ENCODE measurements at regions of chr18 and their contacts with region 1.

Region 1: DNA sequence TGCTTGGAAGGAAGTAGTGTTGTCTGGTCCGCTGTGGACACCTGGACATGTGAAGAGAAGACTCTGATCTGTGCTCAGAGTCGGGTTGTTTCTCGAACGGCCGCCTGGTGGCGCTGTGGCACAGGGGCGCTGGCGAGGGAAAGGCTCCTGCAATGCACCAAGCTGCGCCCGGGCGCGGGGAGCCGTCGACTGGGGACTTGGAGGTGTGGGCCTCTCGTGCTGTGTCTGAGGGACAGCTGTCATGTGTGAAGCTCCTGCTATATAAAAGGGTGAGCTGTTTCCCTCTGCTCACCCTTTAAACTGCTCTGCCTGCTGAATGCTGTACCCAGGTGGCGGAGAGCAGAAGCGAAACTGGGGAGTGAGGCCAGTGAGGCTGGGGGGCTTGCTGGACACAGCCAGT is 44.0 kb downstream of the GNAL start:
- DNase-seq: peak; percentile 57 to 74 (median 71)
- H3K4me3 ChIP-seq: peak overlapping the region in 5 of 7 experiments; percentile 12 to 56 (median 43)
- H3K27ac ChIP-seq: no peak overlapping the region
- H3K4me1 ChIP-seq: peaks cover 0 to 3% (median 1%) of the 10 kb centered on the region in 4 experiments
- H3K27me3 ChIP-seq: peaks cover 0 to 27% (median 8%) of the 10 kb centered on the region in 5 experiments

Region 2: DNA sequence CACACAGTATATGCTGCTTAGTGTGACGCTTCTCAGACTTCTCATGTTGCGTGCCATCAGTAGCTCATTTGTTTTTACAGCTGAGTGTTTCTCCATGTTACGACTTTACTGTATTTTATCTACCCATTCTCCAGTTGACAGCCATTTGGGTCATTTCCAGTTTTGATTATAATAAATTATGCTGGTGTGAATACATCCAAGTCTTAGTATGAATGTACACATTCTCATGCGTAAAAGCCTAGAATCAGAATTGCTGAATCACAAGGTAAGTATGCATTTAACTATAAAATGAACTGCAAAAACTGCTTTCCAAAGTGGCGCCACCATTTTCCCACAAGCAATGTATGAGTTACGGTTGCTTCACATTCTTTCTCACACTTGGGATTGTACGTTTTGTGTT is 307.8 kb before region 1 on chr18:
- CTCF ChIA-PET with region 1: no interaction called
- POLR2A ChIA-PET with region 1: no interaction called
- DNase-seq: no peak
- H3K4me3 ChIP-seq: no peak overlapping the region
- H3K27ac ChIP-seq: no peak overlapping the region
- H3K4me1 ChIP-seq: no peaks in the 10 kb centered on the region
- H3K27me3 ChIP-seq: no peaks in the 10 kb centered on the region

Region 3: GRCh38 chr18:11654736-11655605 is 78.1 kb before region 1 on chr18:
- CTCF ChIA-PET with region 1: interaction called, 10 read pairs
- POLR2A ChIA-PET with region 1: no interaction called
- DNase-seq: peak; percentile 38 to 51 (median 46)
- H3K4me3 ChIP-seq: peak overlapping the region in 2 of 7 experiments; percentile 6 to 40
- H3K27ac ChIP-seq: no peak overlapping the region
- H3K4me1 ChIP-seq: peaks cover 0 to 9% (median 3%) of the 10 kb centered on the region in 4 experiments
- H3K27me3 ChIP-seq: peaks cover 0 to 17% (median 10%) of the 10 kb centered on the region in 5 experiments

Region 4: GRCh38 chr18:11872479-11873136 is 139.6 kb after region 1 on chr18:
- CTCF ChIA-PET with region 1: interaction called, 11 read pairs
- POLR2A ChIA-PET with region 1: no interaction called
- DNase-seq: peak; percentile 34 to 48 (median 45)
- H3K4me3 ChIP-seq: no peak overlapping the region
- H3K27ac ChIP-seq: no peak overlapping the region
- H3K4me1 ChIP-seq: no peaks in the 10 kb centered on the region
- H3K27me3 ChIP-seq: peaks cover 0 to 2% (median 0%) of the 10 kb centered on the region in 5 experiments